GM12878 (cell line): ENCODE measurements at regions of chr5 and their contacts with region 1.

Region 1: DNA sequence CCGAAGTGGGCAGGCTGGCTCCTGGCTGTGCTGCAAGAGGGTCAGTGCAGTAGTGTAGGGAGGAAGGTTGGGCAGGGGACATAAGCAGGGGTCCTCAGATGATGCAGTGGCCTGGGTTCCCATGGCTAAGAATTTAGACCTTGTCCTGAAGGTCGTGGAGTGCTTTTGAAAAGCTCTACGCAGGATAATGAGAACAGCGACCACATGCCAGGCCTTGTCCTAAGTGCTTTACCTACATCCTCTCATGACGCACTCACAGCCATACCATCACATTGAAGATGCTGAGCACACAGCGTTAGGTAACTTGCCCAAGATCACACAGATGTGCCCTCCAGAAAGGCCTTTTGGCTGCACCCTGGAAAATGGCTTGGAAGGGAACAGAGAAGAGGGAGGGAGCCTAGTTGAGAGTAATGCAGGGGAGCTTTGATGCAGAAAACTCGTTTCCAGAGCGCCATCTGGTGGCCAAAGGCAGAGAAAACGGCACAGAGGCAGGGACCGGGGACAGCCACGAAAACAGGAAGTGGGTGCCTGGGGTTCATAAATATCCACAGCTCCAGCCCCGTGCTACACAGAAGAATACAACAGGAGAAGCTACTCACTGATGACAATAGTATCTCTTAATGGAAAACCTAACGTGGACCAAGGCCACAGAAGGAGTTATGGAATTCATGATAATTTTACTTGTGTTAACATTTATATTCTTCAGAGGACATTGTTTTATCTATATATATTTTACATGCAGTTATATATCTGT is 2.6 kb upstream of the PCDH12 start:
- DNase-seq: peak; percentile 64
- ATAC-seq: peak; percentile 99
- H3K4me3 ChIP-seq: no peak overlapping the region
- H3K27ac ChIP-seq: no peak overlapping the region
- H3K4me1 ChIP-seq: peaks cover 3% of the 10 kb centered on the region; the same call in 1 of the 2 replicates
- H3K27me3 ChIP-seq: no peaks in the 10 kb centered on the region
- CTCF ChIP-seq: peak; percentile 78 to 96 (median 92)
- EP300 ChIP-seq: 0 out of 4 replicates have a peak, but pooled peaks of 1 of the 2 experiments have one; percentile 26
- POLR2A ChIP-seq: no peak
- RAD21 ChIP-seq: peak; percentile 71

Region 2: GRCh38 chr5:141598391-141599350 is 362.0 kb before region 1 on chr5:
- CTCF ChIA-PET with region 1: interaction called, 10 read pairs
- POLR2A ChIA-PET with region 1: no interaction called
- RAD21 ChIA-PET with region 1: no interaction called
- SMC1A ChIA-PET with region 1: interaction called, 3 read pairs
- in situ Hi-C with region 1: no loop called
- intact Hi-C with region 1: loop called (anchors 10 kb)
- DNase-seq: no peak
- ATAC-seq: peak; percentile 68
- H3K4me3 ChIP-seq: no peak overlapping the region
- H3K27ac ChIP-seq: no peak overlapping the region; the same call in 1 of the 2 replicates
- H3K4me1 ChIP-seq: peaks cover 11% of the 10 kb centered on the region
- H3K27me3 ChIP-seq: no peaks in the 10 kb centered on the region
- CTCF ChIP-seq: no peak
- EP300 ChIP-seq: no peak
- POLR2A ChIP-seq: no peak
- RAD21 ChIP-seq: no peak

Region 3: DNA sequence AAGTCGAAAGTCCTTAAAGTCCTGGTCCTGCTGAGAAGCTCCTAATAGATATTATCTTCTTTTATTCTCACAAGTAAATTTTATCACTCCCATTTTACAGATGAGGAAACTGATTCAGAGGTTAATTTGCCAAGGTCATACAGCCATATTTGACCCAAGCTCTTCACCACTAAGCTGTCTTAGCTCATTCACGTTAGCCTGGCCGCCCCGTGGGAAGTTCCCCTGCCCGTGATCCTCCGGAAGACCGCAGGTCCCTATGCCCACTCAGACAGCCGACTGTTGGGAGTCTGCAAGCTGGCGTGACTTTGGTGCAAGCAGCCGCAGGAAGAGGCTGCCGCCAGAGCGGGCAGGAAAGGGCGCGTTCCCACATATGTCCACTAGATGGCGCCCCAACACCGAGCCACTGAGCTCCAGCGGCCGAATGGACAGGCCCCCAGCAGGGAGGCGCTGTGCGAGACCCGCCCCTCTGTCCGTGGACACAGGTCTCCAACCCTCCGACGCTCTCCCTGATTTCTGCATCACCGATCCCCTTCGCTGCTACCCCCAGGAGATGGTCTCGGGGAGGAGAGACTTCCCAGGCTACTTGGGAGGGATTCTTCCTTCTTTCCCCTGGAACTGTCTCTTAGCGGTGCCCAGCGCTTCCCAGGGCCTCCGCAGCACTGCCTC is 268.6 kb before region 1 on chr5:
- CTCF ChIA-PET with region 1: interaction called, 101 read pairs
- POLR2A ChIA-PET with region 1: interaction called, 4 read pairs
- RAD21 ChIA-PET with region 1: interaction called, 57 read pairs
- SMC1A ChIA-PET with region 1: interaction called, 46 read pairs
- in situ Hi-C with region 1: loop called (anchors 5 kb)
- intact Hi-C with region 1: loop called (anchors 1 kb)
- DNase-seq: no peak
- ATAC-seq: peak; percentile 97
- H3K4me3 ChIP-seq: no peak overlapping the region
- H3K27ac ChIP-seq: no peak overlapping the region
- H3K4me1 ChIP-seq: peaks cover 6% of the 10 kb centered on the region
- H3K27me3 ChIP-seq: peaks cover 0 to 5% of the 10 kb centered on the region in 2 experiments; a peak in 3 of 4 replicates
- CTCF ChIP-seq: peak; percentile 96 to 98 (median 97)
- EP300 ChIP-seq: no peak
- POLR2A ChIP-seq: no peak
- RAD21 ChIP-seq: peak; percentile 86

Region 4: DNA sequence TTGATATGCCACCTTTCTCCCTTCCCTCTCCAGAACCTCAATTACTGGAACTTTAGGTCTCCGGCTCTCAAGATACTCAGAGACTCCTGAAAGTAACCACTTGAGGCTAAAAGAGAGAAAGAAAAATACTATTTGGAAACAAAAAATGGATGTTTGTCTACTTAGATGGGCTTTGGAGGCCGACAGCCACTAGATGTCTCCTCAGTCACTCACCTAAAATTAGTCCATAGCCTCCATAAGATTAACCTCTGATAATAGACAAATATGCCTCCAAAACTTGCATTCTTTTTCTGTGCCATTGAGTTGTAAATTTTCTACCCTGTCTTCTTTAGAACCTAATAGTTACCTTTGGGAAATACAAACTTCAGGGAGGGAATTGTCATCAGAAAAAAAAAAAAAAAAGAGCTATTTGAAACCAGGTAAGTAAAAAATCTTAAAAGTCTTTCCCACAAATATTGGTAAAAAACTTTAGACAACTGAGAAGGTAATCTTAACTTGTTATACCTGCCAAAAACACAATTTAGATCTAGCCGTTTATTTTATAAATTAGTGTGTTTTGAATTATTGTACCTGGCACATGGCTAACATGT is 71.2 kb before region 1 on chr5:
- CTCF ChIA-PET with region 1: interaction called, 40 read pairs
- POLR2A ChIA-PET with region 1: interaction called, 6 read pairs
- RAD21 ChIA-PET with region 1: interaction called, 28 read pairs
- SMC1A ChIA-PET with region 1: interaction called, 23 read pairs
- in situ Hi-C with region 1: no loop called
- intact Hi-C with region 1: loop called (anchors 2 kb)
- DNase-seq: no peak
- ATAC-seq: peak; percentile 64
- H3K4me3 ChIP-seq: no peak overlapping the region
- H3K27ac ChIP-seq: no peak overlapping the region
- H3K4me1 ChIP-seq: no peaks in the 10 kb centered on the region
- H3K27me3 ChIP-seq: no peaks in the 10 kb centered on the region; a peak in 1 of 4 replicates
- CTCF ChIP-seq: peak; percentile 32 to 49 (median 33); a peak in 4 of 6 replicates
- EP300 ChIP-seq: no peak
- POLR2A ChIP-seq: no peak
- RAD21 ChIP-seq: peak; percentile 46

Region 5: DNA sequence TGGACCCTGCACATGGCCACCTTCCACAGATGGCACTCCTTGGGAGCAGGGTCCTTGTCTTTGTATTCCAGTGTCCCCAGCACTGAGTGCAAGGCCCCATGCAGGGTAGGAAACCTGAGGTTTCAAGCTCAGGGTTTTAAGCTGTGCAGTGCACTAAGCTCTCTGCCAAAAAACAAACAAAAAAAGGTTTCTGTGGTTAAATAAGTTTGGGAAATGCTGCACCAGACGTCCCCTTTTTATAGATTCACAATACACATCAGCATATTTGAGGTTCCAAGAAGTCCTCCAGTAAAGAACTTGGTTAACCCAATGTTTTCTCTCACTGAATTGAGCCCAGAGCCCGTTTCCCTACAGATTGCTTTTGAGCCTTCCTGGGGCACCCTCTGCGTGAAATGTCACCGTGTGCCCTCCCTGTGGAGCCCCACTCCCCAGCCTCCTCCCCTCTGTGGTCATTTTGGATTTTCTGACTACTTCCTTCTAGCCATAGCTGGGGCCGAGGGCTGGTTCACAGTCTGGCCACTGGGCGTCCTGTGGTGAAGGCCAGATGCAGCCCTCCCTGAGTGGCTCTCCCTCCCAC is 19.8 kb before region 1 on chr5:
- CTCF ChIA-PET with region 1: interaction called, 36 read pairs
- POLR2A ChIA-PET with region 1: no interaction called
- RAD21 ChIA-PET with region 1: no interaction called
- SMC1A ChIA-PET with region 1: interaction called, 7 read pairs
- in situ Hi-C with region 1: no loop called
- intact Hi-C with region 1: no loop called
- DNase-seq: no peak
- ATAC-seq: peak; percentile 70
- H3K4me3 ChIP-seq: no peak overlapping the region
- H3K27ac ChIP-seq: no peak overlapping the region
- H3K4me1 ChIP-seq: no peaks in the 10 kb centered on the region
- H3K27me3 ChIP-seq: no peaks in the 10 kb centered on the region
- CTCF ChIP-seq: no peak
- EP300 ChIP-seq: no peak
- POLR2A ChIP-seq: peak; percentile 50; the same call in 1 of the 2 replicates
- RAD21 ChIP-seq: no peak

Region 6: GRCh38 chr5:142012792-142013388 is 52.3 kb after region 1 on chr5 and contains the start of gene GNPDA1:
- CTCF ChIA-PET with region 1: interaction called, 11 read pairs
- POLR2A ChIA-PET with region 1: no interaction called
- RAD21 ChIA-PET with region 1: interaction called, 4 read pairs
- SMC1A ChIA-PET with region 1: interaction called, 11 read pairs
- in situ Hi-C with region 1: no loop called
- intact Hi-C with region 1: no loop called
- DNase-seq: no peak
- ATAC-seq: peak; percentile 82
- H3K4me3 ChIP-seq: peak within 1 kb of the TSS; percentile 66
- H3K27ac ChIP-seq: no peak within 1 kb of the TSS
- H3K4me1 ChIP-seq: peaks cover 18% of the 10 kb centered on the region
- H3K27me3 ChIP-seq: peaks cover 0 to 2% of the 10 kb centered on the region in 2 experiments; a peak in 1 of 4 replicates
- CTCF ChIP-seq: no peak; a peak in 1 of 6 replicates
- EP300 ChIP-seq: no peak
- POLR2A ChIP-seq: peak; percentile 74
- RAD21 ChIP-seq: no peak
- polyA plus RNA-seq, gene GNPDA1: 5.8 to 11.9 TPM